Naive thymus-derived CD8-positive, alpha-beta T cell (primary cell): ENCODE measurements at regions of chr12 and their contacts with region 1.

Region 1: GRCh38 chr12:51779876-51780275 is 68.6 kb downstream of the FIGNL2 start:
- DNase-seq: no peak
- ATAC-seq: no peak
- H3K4me3 Mint-ChIP-seq: peak overlapping the region in 9 of 10 donors; percentile 47 to 83 (median 66)
- H3K27ac Mint-ChIP-seq: peak overlapping the region in 8 of 10 donors; percentile 10 to 89 (median 74)
- H3K4me1 Mint-ChIP-seq: peaks cover 14 to 43% (median 27%) of the 10 kb centered on the region in 4 donors
- H3K27me3 Mint-ChIP-seq: no peaks in the 10 kb centered on the region

Region 2: DNA sequence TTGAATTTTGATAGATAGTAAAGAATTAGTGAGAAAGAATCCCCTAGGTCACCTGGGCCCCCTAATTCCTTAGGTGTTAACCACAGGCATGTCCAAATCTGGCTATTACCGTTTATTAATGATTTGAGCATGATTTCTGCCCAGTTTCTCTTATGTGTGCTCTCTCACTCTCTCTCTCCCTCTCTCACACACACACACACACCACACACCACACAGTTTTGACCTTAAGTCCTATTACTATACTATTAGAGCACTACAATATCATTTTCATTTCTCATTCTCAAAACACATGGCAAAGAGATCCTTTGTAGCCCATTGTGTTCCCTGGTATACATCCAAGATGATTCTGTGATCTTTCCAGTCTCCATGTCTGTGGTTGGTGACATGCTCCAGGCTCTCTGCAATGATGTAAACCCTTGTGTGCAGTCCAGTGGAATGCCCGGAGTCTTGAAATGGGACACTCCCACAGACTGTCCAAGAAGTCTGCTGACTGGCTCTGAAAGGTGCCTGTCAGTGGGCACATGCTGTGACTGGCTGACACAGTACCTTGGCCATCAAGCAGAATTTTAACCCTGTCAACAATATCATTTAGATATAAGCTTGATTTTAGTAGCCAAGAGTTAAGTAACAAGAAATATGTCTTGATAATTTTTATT is 27.5 kb before region 1 on chr12:
- POLR2A ChIA-PET with region 1: no interaction called
- DNase-seq: no peak
- ATAC-seq: no peak
- H3K4me3 Mint-ChIP-seq: no peak overlapping the region
- H3K27ac Mint-ChIP-seq: peak overlapping the region in 1 of 10 donors; percentile 36
- H3K4me1 Mint-ChIP-seq: no peaks in the 10 kb centered on the region
- H3K27me3 Mint-ChIP-seq: peaks cover 4 to 16% (median 6%) of the 10 kb centered on the region in 5 donors

Region 3: GRCh38 chr12:51814311-51815088 is 34.6 kb after region 1 on chr12:
- POLR2A ChIA-PET with region 1: interaction called, 20 read pairs
- DNase-seq: peak; percentile 34 to 81 (median 60)
- ATAC-seq: peak; percentile 89 to 94
- H3K4me3 Mint-ChIP-seq: peak overlapping the region; percentile 74 to 92 (median 82)
- H3K27ac Mint-ChIP-seq: peak overlapping the region in 8 of 10 donors; percentile 21 to 90 (median 83)
- H3K4me1 Mint-ChIP-seq: peaks cover 7 to 16% (median 13%) of the 10 kb centered on the region in 4 donors
- H3K27me3 Mint-ChIP-seq: peaks cover 0 to 10% (median 0%) of the 10 kb centered on the region in 5 donors

Region 4: DNA sequence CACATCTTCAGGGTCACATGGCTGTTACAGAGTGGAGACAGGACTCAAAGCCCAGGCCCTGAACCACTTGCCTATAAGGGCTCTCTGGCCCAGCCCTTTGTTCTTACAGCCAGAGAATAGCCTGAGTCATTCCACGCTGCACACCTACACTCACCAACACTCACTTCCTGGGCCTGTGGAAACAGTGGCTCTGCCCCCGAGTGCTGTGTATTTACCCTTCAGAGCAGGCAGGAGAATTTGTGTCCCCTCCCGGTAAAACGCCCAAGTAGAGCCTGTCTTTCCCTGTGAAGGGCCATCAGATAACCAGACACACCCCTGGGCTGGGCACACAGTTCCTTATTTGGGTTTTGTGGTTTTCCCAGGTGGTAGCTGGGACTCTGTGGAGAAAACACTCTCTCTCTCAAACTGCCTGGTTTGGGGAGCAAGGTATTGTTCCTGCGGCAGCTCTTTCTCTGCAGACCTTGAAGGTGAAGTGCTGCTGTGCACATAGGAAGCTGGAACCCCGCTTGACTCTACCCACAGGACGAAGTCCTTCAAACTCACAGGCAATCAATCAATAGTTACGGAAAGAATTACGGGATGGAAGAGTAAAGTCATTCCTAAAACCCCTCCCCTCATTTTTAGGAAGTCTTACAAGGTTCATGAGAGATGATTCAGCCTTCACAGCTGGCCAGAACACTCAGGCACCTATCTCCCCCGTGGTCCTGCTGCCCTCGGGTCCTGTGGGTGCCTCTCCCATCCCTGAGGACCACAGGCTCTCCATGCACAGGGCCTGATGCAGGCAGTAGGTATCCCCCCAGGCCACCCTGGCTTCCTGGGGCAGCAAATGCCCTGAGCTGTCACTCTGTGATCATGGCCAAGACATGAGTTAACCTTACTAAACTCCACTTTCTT is 48.3 kb after region 1 on chr12:
- POLR2A ChIA-PET with region 1: no interaction called
- DNase-seq: peak in 4 of 10 donors; percentile 16 to 47 (median 16)
- ATAC-seq: peak; percentile 62 to 69
- H3K4me3 Mint-ChIP-seq: peak overlapping the region in 2 of 10 donors; percentile 19 to 51
- H3K27ac Mint-ChIP-seq: peak overlapping the region in 5 of 10 donors; percentile 17 to 76 (median 41)
- H3K4me1 Mint-ChIP-seq: peaks cover 27 to 43% (median 37%) of the 10 kb centered on the region in 4 donors
- H3K27me3 Mint-ChIP-seq: peaks cover 7 to 26% (median 15%) of the 10 kb centered on the region in 5 donors